Dorsolateral prefrontal cortex (tissue), 120 donors: ENCODE measurements at regions of chr5 and their contacts with region 1.

Region 1: GRCh38 chr5:34486160-34486848 is 169.8 kb upstream of the RAI14 start:
- DNase-seq: peak; percentile 80 to 94 (median 85)
- H3K4me3 ChIP-seq: peak overlapping the region in 24 of 59 donors; percentile 2 to 43 (median 26)
- H3K27ac ChIP-seq: peak overlapping the region in 48 of 59 donors; percentile 26 to 96 (median 89)
- H3K27me3 ChIP-seq: no peaks in the 10 kb centered on the region
- CTCF ChIP-seq: peak; percentile 77 to 98 (median 90)

Region 2: DNA sequence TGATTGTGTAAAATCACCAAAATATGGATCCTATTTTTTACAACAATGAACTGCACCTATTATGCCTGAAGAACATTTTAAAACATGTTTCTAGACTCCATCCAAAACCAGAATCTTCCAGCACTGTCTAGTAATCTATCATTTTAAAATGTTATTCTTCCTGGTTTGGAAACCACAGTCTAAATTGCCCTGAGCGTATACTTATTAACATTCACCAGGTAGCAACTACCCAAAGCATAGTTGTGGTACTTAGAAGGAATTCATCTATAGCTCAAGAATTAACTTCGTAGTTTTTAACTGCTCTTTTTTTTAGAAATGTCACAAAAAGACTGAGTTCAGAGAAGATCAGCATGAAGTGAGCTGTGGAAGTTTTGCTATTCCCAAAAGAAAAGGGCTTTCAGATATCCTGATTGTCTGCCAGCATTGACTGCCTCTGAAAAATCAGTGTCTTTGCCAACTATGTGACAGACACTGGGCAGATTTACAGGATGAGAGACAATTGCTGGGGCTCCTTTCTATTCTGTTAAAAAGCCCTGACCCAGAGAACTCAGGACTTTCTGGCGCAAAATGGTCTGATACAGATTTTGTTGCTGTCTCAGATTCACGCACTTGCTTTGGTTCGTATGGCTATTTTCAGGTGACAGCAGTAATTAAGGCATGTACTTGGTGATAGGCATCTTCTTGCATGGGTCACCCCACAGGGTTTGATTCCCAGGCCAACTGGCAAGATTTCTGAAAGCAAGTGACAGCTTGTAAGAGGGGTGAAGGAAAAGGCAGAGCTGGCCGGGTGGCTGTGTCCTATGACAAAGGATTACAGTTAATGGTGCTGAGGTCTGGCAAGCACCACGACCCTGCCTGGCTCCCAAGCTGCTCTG is 17.3 kb after region 1 on chr5:
- intact Hi-C with region 1: loop called in 1 of 2 experiments (anchors 2 kb)
- DNase-seq: peak in 7 of 10 donors; percentile 21 to 81 (median 48)
- H3K4me3 ChIP-seq: peak overlapping the region in 47 of 59 donors; percentile 1 to 57 (median 29)
- H3K27ac ChIP-seq: peak overlapping the region; percentile 43 to 96 (median 87)
- H3K27me3 ChIP-seq: no peaks in the 10 kb centered on the region
- CTCF ChIP-seq: peak in 10 of 56 donors; percentile 7 to 45 (median 18)

Region 3: DNA sequence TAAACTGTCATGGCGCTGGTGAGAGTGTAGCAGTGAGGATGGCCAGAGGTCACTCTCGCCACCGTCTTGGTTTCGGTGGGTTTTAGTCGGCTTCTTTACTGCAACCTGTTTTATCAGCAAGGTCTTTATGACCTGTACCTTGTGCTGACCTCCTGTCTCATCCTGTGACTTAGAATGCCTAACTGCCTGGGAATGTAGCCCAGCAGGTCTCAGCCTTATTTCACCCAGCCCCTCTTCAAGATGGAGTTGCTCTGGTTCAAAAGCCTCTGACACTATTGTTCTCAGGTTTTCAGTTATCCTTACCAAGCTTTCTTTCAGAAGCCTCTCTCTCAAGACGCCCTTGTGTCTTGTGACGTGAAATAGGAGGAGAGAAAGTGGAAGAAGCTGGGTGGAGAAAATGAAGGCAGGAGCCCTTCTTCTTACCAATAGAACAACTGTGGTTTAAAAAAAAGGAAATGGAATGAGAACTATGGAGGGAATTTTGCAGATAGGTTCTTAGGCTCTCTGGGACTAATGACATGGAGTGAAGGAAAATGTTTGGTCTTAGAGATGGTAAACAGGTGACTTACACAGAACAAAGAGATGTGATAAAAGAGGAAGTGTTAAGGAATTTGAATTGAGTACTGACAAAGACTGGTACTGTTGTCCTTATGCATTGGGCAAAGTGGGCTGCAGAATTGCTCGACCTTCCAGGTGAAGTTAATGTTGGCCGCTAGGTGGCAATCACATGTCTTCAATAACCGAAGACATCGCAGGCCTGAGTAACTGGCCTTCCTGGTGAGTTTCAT is 36.5 kb after region 1 on chr5:
- intact Hi-C with region 1: loop called (anchors 2 to 5 kb)
- DNase-seq: peak in 9 of 10 donors; percentile 68 to 83 (median 73)
- H3K4me3 ChIP-seq: no peak overlapping the region
- H3K27ac ChIP-seq: peak overlapping the region in 10 of 59 donors; percentile 8 to 61 (median 40)
- H3K27me3 ChIP-seq: peaks cover 0 to 4% (median 0%) of the 10 kb centered on the region in 45 donors
- CTCF ChIP-seq: peak; percentile 73 to 93 (median 84)

Region 4: DNA sequence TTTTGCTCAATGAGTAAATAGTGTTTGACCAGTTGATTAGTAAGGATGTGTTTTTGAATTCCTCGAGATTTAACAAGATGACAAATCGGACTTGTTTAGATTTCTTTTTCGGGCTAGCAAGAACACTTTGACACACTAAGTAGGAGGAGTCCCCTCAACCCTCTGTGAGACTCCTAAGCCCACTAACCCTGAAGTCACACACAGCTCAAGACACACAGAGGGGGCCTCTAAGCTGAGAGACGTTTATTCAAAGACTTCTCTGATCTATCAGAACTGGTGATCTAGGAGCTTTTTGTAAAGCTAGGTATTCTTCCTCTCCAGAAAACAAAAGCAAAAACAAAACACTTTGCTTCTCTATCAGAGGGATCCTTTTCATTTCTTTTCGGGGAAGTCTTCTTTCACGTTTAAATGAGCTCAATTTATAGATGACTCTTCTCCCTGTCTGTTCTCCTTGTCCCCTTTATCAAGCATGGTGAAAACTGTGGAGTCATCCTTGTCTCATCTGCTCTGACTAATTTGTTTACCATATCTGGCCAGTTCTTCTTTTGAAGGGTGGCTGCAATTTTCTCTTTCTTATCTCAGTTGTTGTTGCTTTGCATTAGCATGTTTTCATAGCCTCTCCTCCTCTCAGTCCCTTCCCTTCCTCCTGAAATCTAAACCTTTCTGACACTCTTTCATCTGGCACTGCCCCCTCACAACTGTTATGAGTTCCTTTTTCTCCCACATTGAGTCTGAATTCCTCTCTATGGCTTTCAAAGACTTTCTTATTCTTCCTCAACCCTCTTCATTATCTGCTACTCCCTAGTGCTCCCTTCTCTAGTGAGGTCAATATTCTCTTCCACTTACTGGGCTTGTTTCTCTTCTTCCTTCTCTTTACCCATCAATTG is 101.3 kb after region 1 on chr5:
- intact Hi-C with region 1: no loop called
- DNase-seq: no peak
- H3K4me3 ChIP-seq: no peak overlapping the region
- H3K27ac ChIP-seq: no peak overlapping the region
- H3K27me3 ChIP-seq: peaks cover 0 to 7% (median 0%) of the 10 kb centered on the region in 45 donors
- CTCF ChIP-seq: no peak

Region 5: DNA sequence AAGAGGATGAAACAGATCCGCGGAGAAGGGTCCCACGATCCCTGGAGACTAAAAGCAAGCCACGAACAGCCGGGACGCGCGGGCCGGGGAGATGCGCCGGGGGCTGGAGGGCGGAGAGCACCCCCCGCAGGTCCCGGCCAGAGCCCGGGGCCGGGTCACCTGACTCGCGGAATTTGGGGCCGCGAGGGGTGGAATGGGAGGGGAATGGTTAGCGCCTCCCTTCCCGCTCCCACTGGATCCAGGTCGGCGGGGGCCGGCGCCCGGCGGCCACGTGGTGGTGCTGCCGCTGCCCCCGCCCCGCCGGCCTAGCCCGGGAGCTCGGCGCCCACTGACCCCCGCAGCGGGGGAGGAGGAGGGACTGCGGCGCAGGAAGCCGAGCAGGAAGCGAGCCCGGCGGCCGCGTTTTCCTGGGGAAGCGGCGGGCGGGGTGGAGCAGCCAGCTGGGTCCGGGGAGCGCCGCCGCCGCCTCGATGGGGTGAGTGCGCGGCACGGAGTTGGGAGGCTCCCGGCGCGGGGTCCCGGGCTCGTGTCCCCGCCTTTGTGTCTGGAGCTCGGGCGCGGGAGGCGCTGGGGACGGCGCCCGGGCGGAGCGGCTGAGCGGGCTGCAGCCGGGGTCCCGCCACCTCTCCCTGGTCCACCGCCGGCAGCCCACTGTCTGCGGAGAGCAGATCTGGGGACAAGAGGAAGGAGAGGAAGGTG is 169.8 kb after region 1 on chr5 and contains the start of gene RAI14:
- intact Hi-C with region 1: loop called in 1 of 2 experiments (anchors 5 kb)
- DNase-seq: peak; percentile 37 to 82 (median 59)
- H3K4me3 ChIP-seq: peak within 1 kb of the TSS; percentile 54 to 98 (median 89)
- H3K27ac ChIP-seq: peak within 1 kb of the TSS; percentile 1 to 92 (median 84)
- H3K27me3 ChIP-seq: no peaks in the 10 kb centered on the region
- CTCF ChIP-seq: peak in 25 of 56 donors; percentile 5 to 52 (median 25)
- total RNA-seq, gene RAI14: 5.6 to 30.9 (median 12.5) TPM